ENCODE measurements at regions of chr7 and their contacts with region 1.

Region 1: DNA sequence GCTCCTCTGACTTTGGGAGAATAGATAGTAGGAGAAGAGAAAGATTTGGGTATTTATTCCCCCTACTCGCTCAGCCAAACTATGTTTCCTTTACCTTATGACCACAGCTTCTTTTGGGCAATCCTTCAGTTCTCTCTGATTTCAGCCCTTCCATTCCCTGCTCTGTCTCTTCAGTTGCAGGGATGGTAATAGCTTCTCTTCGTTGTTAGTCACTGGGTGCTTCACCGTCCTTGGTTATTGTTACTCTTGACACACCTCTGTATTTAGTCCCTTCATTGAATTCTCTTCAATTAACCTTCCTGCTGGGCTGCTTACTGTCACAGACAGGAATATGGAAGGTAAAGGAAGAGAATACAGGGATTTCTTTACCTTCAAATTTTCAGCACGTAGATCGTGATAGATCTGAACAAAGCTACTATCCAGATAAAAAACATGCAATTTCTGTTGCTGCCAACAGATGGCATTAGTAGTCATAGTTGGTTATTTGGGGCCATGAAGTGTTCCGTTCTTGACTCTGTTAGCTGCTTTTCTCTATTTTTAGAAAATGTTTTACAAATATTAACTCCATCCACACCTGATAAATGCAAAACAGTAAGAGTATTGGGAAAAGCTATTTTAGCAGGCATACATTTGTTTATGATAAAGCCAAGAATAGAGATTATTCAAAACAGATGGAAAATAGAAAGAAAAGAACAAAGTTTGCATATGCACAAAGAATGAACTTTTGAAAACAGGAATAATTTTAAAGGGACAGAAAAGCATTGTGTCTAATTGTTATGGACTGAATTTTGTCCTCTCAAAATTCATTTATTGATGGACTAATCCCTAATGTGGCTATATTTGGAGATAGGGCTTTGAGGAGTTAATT is 14.0 kb upstream of the PTTG1IP2 start:
- DNase-seq: no peak
- H3K4me3 Mint-ChIP-seq: no peak overlapping the region
- H3K27ac Mint-ChIP-seq: no peak overlapping the region
- H3K4me1 Mint-ChIP-seq: peaks cover 5% of the 10 kb centered on the region
- H3K27me3 Mint-ChIP-seq: peaks cover 8% of the 10 kb centered on the region

Region 2: GRCh38 chr7:90271753-90272152 is 183.6 kb before region 1 on chr7:
- CTCF ChIA-PET with region 1: no interaction called
- DNase-seq: no peak
- H3K4me3 Mint-ChIP-seq: no peak overlapping the region
- H3K27ac Mint-ChIP-seq: no peak overlapping the region
- H3K4me1 Mint-ChIP-seq: no peaks in the 10 kb centered on the region
- H3K27me3 Mint-ChIP-seq: peaks cover 8% of the 10 kb centered on the region

Region 3: DNA sequence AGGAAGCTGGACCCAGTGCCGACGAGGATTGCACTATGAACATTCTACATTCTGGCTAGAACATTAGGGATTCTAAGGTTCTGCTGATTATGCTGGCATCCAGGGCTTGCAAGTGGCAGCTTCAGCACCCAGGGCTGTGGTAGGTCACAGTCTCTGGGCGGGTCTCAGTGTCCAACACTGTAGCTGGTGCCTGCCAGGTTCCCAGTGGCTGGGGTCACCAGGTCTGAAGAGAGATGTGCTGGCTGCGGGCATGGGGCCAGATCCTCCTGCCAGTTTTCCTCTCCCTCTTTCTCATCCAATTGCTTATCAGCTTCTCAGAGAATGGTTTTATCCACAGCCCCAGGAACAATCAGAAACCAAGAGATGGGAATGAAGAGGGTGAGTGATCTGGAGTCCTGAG is 14.2 kb after region 1 on chr7 and contains the start of gene PTTG1IP2:
- CTCF ChIA-PET with region 1: interaction called, 10 read pairs
- DNase-seq: no peak
- H3K4me3 Mint-ChIP-seq: no peak within 1 kb of the TSS
- H3K27ac Mint-ChIP-seq: no peak within 1 kb of the TSS
- H3K4me1 Mint-ChIP-seq: no peaks in the 10 kb centered on the region
- H3K27me3 Mint-ChIP-seq: peaks cover 4% of the 10 kb centered on the region

Region 4: GRCh38 chr7:91034459-91035368 is 579.3 kb after region 1 on chr7:
- CTCF ChIA-PET with region 1: interaction called, 10 read pairs
- DNase-seq: peak; percentile 34
- H3K4me3 Mint-ChIP-seq: no peak overlapping the region
- H3K27ac Mint-ChIP-seq: no peak overlapping the region
- H3K4me1 Mint-ChIP-seq: no peaks in the 10 kb centered on the region
- H3K27me3 Mint-ChIP-seq: no peaks in the 10 kb centered on the region

Measured in activated naive CD4-positive, alpha-beta T cell treated with anti-CD3 and anti-CD28 coated beads, Interleukin-2, amount 10 ng/mL, durations not matched to agents 7 days and 5 days (primary cell).